CD4-positive, alpha-beta T cell (primary cell): ENCODE measurements at regions of chr1 and their contacts with region 1.

Region 1: GRCh38 chr1:75203415-75204277 is 69.5 kb downstream of the LHX8 start:
- DNase-seq: peak in 2 of 14 experiments; percentile 4 to 8
- ATAC-seq: no peak
- H3K4me3 ChIP-seq: no peak overlapping the region
- H3K4me3 Mint-ChIP-seq: no peak overlapping the region
- H3K27ac ChIP-seq: no peak overlapping the region
- H3K27ac Mint-ChIP-seq: no peak overlapping the region
- H3K4me1 ChIP-seq: no peaks in the 10 kb centered on the region
- H3K4me1 Mint-ChIP-seq: no peaks in the 10 kb centered on the region
- H3K27me3 ChIP-seq: no peaks in the 10 kb centered on the region
- H3K27me3 Mint-ChIP-seq: no peaks in the 10 kb centered on the region
- CTCF ChIP-seq: no peak

Region 2: GRCh38 chr1:74771913-74772515 is 431.6 kb before region 1 on chr1:
- CTCF ChIA-PET with region 1: no interaction called
- POLR2A ChIA-PET with region 1: no interaction called
- intact Hi-C with region 1: loop called in 1 of 2 experiments (anchors 5 kb)
- DNase-seq: peak in 3 of 14 experiments; percentile 31 to 43 (median 41)
- ATAC-seq: peak; percentile 49
- H3K4me3 ChIP-seq: no peak overlapping the region
- H3K4me3 Mint-ChIP-seq: no peak overlapping the region
- H3K27ac ChIP-seq: no peak overlapping the region
- H3K27ac Mint-ChIP-seq: no peak overlapping the region
- H3K4me1 ChIP-seq: no peaks in the 10 kb centered on the region
- H3K4me1 Mint-ChIP-seq: no peaks in the 10 kb centered on the region
- H3K27me3 ChIP-seq: peaks cover 0 to 11% of the 10 kb centered on the region in 2 experiments
- H3K27me3 Mint-ChIP-seq: peaks cover 29% of the 10 kb centered on the region
- CTCF ChIP-seq: peak; percentile 82

Region 3: GRCh38 chr1:75696000-75696399 is 492.4 kb after region 1 on chr1:
- CTCF ChIA-PET with region 1: no interaction called
- POLR2A ChIA-PET with region 1: no interaction called
- intact Hi-C with region 1: no loop called
- DNase-seq: no peak
- ATAC-seq: no peak
- H3K4me3 ChIP-seq: no peak overlapping the region
- H3K4me3 Mint-ChIP-seq: no peak overlapping the region
- H3K27ac ChIP-seq: no peak overlapping the region
- H3K27ac Mint-ChIP-seq: no peak overlapping the region
- H3K4me1 ChIP-seq: no peaks in the 10 kb centered on the region
- H3K4me1 Mint-ChIP-seq: no peaks in the 10 kb centered on the region
- H3K27me3 ChIP-seq: no peaks in the 10 kb centered on the region
- H3K27me3 Mint-ChIP-seq: peaks cover 27% of the 10 kb centered on the region
- CTCF ChIP-seq: no peak